H1 (cell line): ENCODE measurements at regions of chr7 and their contacts with region 1.

Region 1: DNA sequence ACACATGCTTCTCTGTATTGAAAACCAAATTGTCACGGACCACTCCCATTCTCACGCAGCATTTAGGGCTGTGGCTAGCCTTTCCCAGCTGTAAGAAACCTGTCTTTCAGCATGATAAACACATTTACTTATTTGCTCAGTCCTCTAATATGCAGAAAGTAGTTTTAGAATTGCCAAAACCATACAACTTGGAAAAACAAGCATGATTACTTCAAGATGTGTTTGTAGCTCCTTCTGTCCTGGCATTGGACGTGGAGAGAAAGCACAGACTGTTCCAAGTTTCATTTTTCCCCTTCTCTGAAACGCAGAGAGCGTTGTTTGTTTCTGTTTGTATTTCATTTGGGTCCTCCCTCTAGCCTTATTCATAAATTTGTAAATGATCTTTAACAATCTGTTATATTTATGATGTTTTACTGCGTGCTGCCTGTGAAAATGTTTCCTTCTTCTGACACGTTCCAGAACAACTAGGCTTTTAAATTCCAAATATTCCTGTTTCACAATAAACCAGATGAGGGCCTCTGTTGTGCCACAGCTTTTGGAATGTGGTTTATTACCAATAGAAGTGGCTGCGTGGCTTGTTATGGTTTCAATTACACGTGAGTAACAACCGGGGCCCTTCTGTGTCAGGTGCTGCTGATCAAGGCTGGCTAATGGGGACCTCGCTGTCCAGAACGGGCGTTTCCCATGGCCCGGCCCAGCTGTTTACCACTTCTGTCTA is 26.1 kb downstream of the MNX1 start:
- DNase-seq: peak in 1 of 2 experiments; percentile 30
- H3K4me3 ChIP-seq: no peak overlapping the region
- H3K27ac ChIP-seq: no peak overlapping the region
- H3K4me1 ChIP-seq: no peaks in the 10 kb centered on the region
- H3K27me3 ChIP-seq: no peaks in the 10 kb centered on the region
- CTCF ChIP-seq: no peak
- EP300 ChIP-seq: no peak
- POLR2A ChIP-seq: no peak
- RAD21 ChIP-seq: no peak

Region 2: DNA sequence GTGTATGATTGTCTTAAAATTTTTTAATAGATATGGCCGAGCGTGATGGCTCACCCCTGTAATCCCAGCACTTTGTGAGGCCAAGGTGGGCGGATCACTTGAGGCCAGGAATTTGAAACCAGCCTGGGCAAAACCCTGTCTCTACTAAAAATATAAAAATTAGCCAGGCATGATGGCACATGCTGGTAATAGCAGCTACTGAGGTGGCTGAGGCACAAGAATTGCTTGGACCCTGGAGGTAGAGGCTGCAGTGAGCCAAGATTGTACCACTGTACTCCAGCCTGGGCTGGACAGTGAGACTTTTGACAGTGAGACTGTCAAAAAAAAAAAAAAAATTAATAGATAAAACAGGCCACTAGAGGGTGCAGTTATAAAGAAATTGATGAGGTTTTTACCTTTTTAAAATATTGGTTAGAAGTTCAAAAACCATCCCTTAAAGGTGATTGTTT is 14.3 kb before region 1 on chr7:
- CTCF ChIA-PET with region 1: interaction called, 40 read pairs
- POLR2A ChIA-PET with region 1: interaction called, 6 read pairs
- DNase-seq: no peak
- H3K4me3 ChIP-seq: no peak overlapping the region
- H3K27ac ChIP-seq: no peak overlapping the region
- H3K4me1 ChIP-seq: no peaks in the 10 kb centered on the region
- H3K27me3 ChIP-seq: no peaks in the 10 kb centered on the region
- CTCF ChIP-seq: no peak
- EP300 ChIP-seq: no peak
- POLR2A ChIP-seq: no peak
- RAD21 ChIP-seq: peak in 1 of 2 experiments; percentile 30; a peak in 3 of 4 replicates